Breast epithelium (tissue), 4 donors: ENCODE measurements at regions of chr13 and their contacts with region 1.

Region 1: GRCh38 chr13:96851856-96852445 is 142.3 kb downstream of the OXGR1 start:
- DNase-seq: no peak
- H3K4me3 ChIP-seq: no peak overlapping the region
- H3K27ac ChIP-seq: no peak overlapping the region
- H3K4me1 ChIP-seq: no peaks in the 10 kb centered on the region
- H3K27me3 ChIP-seq: no peaks in the 10 kb centered on the region
- CTCF ChIP-seq: no peak
- POLR2A ChIP-seq: no peak

Region 2: GRCh38 chr13:95834134-95834765 is 1017.7 kb before region 1 on chr13:
- intact Hi-C with region 1: no loop called
- DNase-seq: peak in 1 of 2 donors; percentile 25
- H3K4me3 ChIP-seq: no peak overlapping the region
- H3K27ac ChIP-seq: no peak overlapping the region
- H3K4me1 ChIP-seq: no peaks in the 10 kb centered on the region
- H3K27me3 ChIP-seq: no peaks in the 10 kb centered on the region
- CTCF ChIP-seq: peak; percentile 67 to 95 (median 90)
- POLR2A ChIP-seq: no peak

Region 3: DNA sequence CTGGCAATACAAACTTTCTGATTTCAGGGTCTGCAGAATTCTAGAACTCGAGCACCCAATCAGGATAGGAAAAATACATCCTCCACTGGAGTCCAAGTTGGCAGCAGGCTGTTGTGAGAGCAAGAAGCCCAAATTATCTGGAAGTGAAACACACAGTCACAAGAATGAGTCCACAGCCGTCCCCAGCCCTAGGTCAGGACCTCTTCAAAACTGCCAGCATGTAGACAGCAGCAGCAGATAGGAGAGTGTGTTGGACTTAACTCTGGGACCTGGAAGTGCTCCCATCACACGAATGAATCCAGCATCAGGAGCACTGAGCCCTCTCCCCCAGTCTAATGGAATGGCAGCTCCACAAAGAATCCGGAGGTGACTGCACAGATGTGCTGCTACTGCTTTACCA is 278.4 kb before region 1 on chr13:
- intact Hi-C with region 1: loop called (anchors 5 kb)
- DNase-seq: no peak
- H3K4me3 ChIP-seq: no peak overlapping the region
- H3K27ac ChIP-seq: no peak overlapping the region
- H3K4me1 ChIP-seq: no peaks in the 10 kb centered on the region
- H3K27me3 ChIP-seq: no peaks in the 10 kb centered on the region
- CTCF ChIP-seq: no peak
- POLR2A ChIP-seq: no peak

Region 4: DNA sequence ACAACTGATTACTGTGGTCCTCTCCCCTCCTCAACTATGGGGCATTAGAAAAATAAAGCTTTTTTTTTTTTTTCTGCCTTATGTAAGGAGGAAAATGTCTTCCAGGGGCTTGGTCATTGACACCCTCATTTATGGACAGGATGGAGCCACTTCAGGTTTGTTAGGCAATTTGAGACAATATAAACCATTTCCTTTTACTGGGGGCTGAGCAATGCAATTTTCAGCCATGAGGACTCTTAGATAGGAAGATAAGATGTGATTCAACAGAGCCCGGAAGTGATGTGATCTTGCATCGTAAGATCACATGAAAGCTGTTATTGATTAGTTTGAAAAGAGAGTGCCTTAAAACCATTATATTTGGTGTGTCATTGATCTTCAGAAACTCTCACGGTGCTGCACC is 68.4 kb before region 1 on chr13:
- intact Hi-C with region 1: no loop called
- DNase-seq: no peak
- H3K4me3 ChIP-seq: no peak overlapping the region
- H3K27ac ChIP-seq: no peak overlapping the region
- H3K4me1 ChIP-seq: no peaks in the 10 kb centered on the region
- H3K27me3 ChIP-seq: no peaks in the 10 kb centered on the region
- CTCF ChIP-seq: no peak
- POLR2A ChIP-seq: no peak